Naive thymus-derived CD4-positive, alpha-beta T cell (primary cell): ENCODE measurements at regions of chr5 and their contacts with region 1.

Region 1: DNA sequence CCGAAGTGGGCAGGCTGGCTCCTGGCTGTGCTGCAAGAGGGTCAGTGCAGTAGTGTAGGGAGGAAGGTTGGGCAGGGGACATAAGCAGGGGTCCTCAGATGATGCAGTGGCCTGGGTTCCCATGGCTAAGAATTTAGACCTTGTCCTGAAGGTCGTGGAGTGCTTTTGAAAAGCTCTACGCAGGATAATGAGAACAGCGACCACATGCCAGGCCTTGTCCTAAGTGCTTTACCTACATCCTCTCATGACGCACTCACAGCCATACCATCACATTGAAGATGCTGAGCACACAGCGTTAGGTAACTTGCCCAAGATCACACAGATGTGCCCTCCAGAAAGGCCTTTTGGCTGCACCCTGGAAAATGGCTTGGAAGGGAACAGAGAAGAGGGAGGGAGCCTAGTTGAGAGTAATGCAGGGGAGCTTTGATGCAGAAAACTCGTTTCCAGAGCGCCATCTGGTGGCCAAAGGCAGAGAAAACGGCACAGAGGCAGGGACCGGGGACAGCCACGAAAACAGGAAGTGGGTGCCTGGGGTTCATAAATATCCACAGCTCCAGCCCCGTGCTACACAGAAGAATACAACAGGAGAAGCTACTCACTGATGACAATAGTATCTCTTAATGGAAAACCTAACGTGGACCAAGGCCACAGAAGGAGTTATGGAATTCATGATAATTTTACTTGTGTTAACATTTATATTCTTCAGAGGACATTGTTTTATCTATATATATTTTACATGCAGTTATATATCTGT is 2.6 kb upstream of the PCDH12 start:
- DNase-seq: peak; percentile 82 to 95 (median 89)
- ATAC-seq: peak; percentile 94
- H3K4me3 ChIP-seq: peak overlapping the region; percentile 7
- H3K4me3 Mint-ChIP-seq: peak overlapping the region; percentile 5 to 75 (median 54)
- H3K27ac ChIP-seq: peak overlapping the region; percentile 50
- H3K27ac Mint-ChIP-seq: peak overlapping the region; percentile 82 to 93 (median 92)
- H3K4me1 ChIP-seq: peaks cover 30 to 43% of the 10 kb centered on the region in 2 donors
- H3K4me1 Mint-ChIP-seq: peaks cover 29 to 51% (median 40%) of the 10 kb centered on the region in 7 donors
- H3K27me3 ChIP-seq: no peaks in the 10 kb centered on the region
- H3K27me3 Mint-ChIP-seq: no peaks in the 10 kb centered on the region

Region 2: GRCh38 chr5:141664732-141665461 is 295.7 kb before region 1 on chr5:
- CTCF ChIA-PET with region 1: interaction called, 24 read pairs
- POLR2A ChIA-PET with region 1: interaction called, 5 read pairs
- intact Hi-C with region 1: loop called (anchors 1 kb)
- DNase-seq: peak; percentile 36 to 75 (median 61)
- ATAC-seq: peak; percentile 94
- H3K4me3 ChIP-seq: no peak overlapping the region
- H3K4me3 Mint-ChIP-seq: no peak overlapping the region
- H3K27ac ChIP-seq: no peak overlapping the region
- H3K27ac Mint-ChIP-seq: no peak overlapping the region
- H3K4me1 ChIP-seq: no peaks in the 10 kb centered on the region
- H3K4me1 Mint-ChIP-seq: peaks cover 0 to 6% (median 3%) of the 10 kb centered on the region in 7 donors
- H3K27me3 ChIP-seq: no peaks in the 10 kb centered on the region
- H3K27me3 Mint-ChIP-seq: no peaks in the 10 kb centered on the region

Region 3: GRCh38 chr5:141701360-141702119 is 259.1 kb before region 1 on chr5:
- CTCF ChIA-PET with region 1: interaction called, 143 read pairs
- POLR2A ChIA-PET with region 1: interaction called, 4 read pairs
- intact Hi-C with region 1: loop called (anchors 1 kb)
- DNase-seq: no peak
- ATAC-seq: peak; percentile 28
- H3K4me3 ChIP-seq: peak overlapping the region; percentile 58
- H3K4me3 Mint-ChIP-seq: peak overlapping the region in 7 of 10 donors; percentile 76 to 89 (median 83)
- H3K27ac ChIP-seq: no peak overlapping the region
- H3K27ac Mint-ChIP-seq: peak overlapping the region in 4 of 9 donors; percentile 14 to 54 (median 18)
- H3K4me1 ChIP-seq: peaks cover 9 to 11% of the 10 kb centered on the region in 2 donors
- H3K4me1 Mint-ChIP-seq: peaks cover 5 to 20% (median 12%) of the 10 kb centered on the region in 7 donors
- H3K27me3 ChIP-seq: no peaks in the 10 kb centered on the region
- H3K27me3 Mint-ChIP-seq: peaks cover 25 to 47% (median 40%) of the 10 kb centered on the region in 5 donors

Region 4: DNA sequence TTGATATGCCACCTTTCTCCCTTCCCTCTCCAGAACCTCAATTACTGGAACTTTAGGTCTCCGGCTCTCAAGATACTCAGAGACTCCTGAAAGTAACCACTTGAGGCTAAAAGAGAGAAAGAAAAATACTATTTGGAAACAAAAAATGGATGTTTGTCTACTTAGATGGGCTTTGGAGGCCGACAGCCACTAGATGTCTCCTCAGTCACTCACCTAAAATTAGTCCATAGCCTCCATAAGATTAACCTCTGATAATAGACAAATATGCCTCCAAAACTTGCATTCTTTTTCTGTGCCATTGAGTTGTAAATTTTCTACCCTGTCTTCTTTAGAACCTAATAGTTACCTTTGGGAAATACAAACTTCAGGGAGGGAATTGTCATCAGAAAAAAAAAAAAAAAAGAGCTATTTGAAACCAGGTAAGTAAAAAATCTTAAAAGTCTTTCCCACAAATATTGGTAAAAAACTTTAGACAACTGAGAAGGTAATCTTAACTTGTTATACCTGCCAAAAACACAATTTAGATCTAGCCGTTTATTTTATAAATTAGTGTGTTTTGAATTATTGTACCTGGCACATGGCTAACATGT is 71.2 kb before region 1 on chr5:
- CTCF ChIA-PET with region 1: interaction called, 21 read pairs
- POLR2A ChIA-PET with region 1: interaction called, 9 read pairs
- intact Hi-C with region 1: loop called (anchors 1 kb)
- DNase-seq: no peak
- ATAC-seq: no peak
- H3K4me3 ChIP-seq: no peak overlapping the region
- H3K4me3 Mint-ChIP-seq: no peak overlapping the region
- H3K27ac ChIP-seq: no peak overlapping the region
- H3K27ac Mint-ChIP-seq: peak overlapping the region in 1 of 9 donors; percentile 0
- H3K4me1 ChIP-seq: no peaks in the 10 kb centered on the region
- H3K4me1 Mint-ChIP-seq: peaks cover 0 to 3% (median 0%) of the 10 kb centered on the region in 7 donors
- H3K27me3 ChIP-seq: peaks cover 0 to 8% of the 10 kb centered on the region in 2 donors
- H3K27me3 Mint-ChIP-seq: peaks cover 15 to 46% (median 34%) of the 10 kb centered on the region in 5 donors

Region 5: DNA sequence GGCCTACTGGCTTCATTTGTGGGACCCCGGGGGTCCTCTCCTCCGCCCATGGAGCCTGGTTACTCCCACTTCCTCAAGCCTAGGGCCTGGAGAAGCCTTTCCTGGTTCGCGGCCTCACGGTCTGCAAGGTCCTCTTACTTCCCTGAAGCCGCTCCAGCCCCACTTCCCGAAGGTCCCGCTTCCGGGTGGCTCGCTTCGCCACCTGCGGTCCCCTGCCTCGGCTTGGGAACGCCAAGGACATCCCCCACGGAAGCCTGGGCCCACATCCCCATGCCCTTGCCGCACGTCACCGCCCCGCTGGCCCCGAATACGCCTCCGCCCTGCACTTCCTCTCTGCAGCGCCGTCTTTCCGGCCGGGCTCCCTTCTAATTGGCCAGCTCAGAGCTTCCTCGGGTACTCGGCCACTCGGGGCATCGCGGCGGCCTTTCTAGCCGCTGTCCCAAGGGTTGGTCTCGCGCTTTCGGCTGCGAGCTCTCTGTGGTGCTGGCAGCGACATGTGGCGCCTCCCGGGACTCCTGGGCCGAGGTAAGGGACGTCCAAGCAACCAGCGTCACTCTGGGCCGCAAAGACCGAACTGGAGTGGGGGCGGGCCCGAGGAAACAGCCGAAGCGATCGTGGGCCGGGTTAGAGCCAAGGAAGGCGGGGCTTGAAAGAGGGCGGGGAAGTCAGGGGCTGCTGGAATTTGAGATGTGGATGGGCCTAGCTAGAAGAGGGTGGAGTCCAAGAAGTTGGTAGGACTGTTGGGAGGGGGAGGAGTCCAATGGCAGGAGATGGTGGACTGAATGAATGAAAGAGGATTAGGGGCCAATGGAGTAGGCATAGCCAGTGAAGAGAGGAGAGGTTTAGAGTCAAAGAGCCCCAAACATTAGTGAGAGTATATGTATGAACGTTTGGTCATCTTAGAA is 36.9 kb before region 1 on chr5 and contains the start of gene DELE1:
- CTCF ChIA-PET with region 1: interaction called, 9 read pairs
- POLR2A ChIA-PET with region 1: interaction called, 20 read pairs
- intact Hi-C with region 1: loop called (anchors 1 kb)
- DNase-seq: peak; percentile 79 to 92 (median 90)
- ATAC-seq: peak; percentile 97
- H3K4me3 ChIP-seq: peak within 1 kb of the TSS; percentile 81
- H3K4me3 Mint-ChIP-seq: peak within 1 kb of the TSS; percentile 88 to 98 (median 94)
- H3K27ac ChIP-seq: peak within 1 kb of the TSS; percentile 98
- H3K27ac Mint-ChIP-seq: peak within 1 kb of the TSS; percentile 87 to 99 (median 98)
- H3K4me1 ChIP-seq: peaks cover 10 to 14% of the 10 kb centered on the region in 2 donors
- H3K4me1 Mint-ChIP-seq: peaks cover 23 to 54% (median 36%) of the 10 kb centered on the region in 7 donors
- H3K27me3 ChIP-seq: no peaks in the 10 kb centered on the region
- H3K27me3 Mint-ChIP-seq: no peaks in the 10 kb centered on the region
- total RNA-seq, gene DELE1: 77.3 to 101 (median 88.2) TPM

Region 6: GRCh38 chr5:141976176-141976575 is 15.6 kb after region 1 on chr5:
- CTCF ChIA-PET with region 1: interaction called, 19 read pairs
- POLR2A ChIA-PET with region 1: interaction called, 55 read pairs
- intact Hi-C with region 1: no loop called
- DNase-seq: no peak
- ATAC-seq: no peak
- H3K4me3 ChIP-seq: no peak overlapping the region
- H3K4me3 Mint-ChIP-seq: no peak overlapping the region
- H3K27ac ChIP-seq: no peak overlapping the region
- H3K27ac Mint-ChIP-seq: no peak overlapping the region
- H3K4me1 ChIP-seq: peaks cover 0 to 3% of the 10 kb centered on the region in 2 donors
- H3K4me1 Mint-ChIP-seq: peaks cover 14 to 38% (median 27%) of the 10 kb centered on the region in 7 donors
- H3K27me3 ChIP-seq: no peaks in the 10 kb centered on the region
- H3K27me3 Mint-ChIP-seq: no peaks in the 10 kb centered on the region